Activated CD8-positive, alpha-beta memory T cell treated with anti-CD3 and anti-CD28 coated beads, Interleukin-2, amount 10 ng/mL, durations not matched to agents 7 days and 5 days (primary cell): ENCODE measurements at regions of chr6 and their contacts with region 1.

Region 1: DNA sequence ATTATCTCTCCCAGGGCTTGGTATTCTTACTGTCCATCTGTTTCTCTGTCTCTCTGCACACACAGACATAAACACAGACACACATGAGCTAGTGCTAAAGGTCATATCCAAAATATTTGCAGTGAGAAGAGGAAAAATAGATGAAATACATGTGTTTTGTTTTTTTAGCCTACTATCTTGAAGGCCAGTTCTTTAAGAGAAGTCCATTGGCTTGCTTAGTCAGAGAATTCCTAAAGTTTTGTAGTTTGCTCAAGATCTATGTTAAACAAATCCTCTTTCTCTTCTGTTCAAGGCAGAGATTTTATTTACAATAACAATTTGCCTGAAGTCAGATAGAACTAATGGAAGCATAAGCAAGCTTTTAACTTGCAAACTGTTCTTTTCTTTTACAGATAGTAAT is 120.0 kb upstream of the AKIRIN2 start:
- DNase-seq: no peak
- ATAC-seq: no peak
- H3K4me3 Mint-ChIP-seq: no peak overlapping the region
- H3K27ac Mint-ChIP-seq: no peak overlapping the region
- H3K4me1 Mint-ChIP-seq: peaks cover 13% of the 10 kb centered on the region
- H3K27me3 Mint-ChIP-seq: no peaks in the 10 kb centered on the region

Region 2: DNA sequence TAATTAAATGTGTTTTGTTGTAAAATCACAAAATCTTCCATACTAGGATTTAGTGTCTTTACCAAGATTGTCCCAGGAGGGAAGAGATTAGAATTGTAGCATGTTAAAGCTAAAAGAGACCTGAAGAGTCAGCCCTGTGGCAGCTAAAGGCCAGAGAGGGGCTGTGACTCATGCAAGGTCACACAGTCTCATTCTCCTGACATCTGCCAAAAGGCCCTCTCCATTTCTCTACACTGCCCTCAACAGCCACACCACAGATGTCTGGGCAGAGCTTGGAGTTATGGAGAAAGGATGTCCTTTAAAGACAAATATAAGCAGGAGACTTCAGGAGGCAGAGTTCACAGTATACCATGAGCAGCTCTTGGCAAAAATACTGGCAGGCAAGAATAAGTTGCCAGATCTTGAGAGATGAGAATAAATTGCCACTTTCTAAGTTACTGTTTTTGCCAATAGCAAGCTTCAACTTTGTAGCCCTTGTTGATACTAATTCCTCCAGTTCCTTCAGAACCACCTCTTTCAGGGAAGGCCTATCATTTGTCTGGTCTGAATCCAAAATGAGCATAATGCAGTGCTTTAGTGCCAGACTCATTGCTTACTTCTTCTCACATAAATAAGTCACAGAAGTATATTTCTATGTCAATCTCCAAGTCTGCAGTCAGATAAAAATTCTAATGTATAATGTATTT is 161.6 kb before region 1 on chr6:
- CTCF ChIA-PET with region 1: no interaction called
- DNase-seq: no peak
- ATAC-seq: no peak
- H3K4me3 Mint-ChIP-seq: no peak overlapping the region
- H3K27ac Mint-ChIP-seq: no peak overlapping the region
- H3K4me1 Mint-ChIP-seq: peaks cover 12% of the 10 kb centered on the region
- H3K27me3 Mint-ChIP-seq: no peaks in the 10 kb centered on the region

Region 3: DNA sequence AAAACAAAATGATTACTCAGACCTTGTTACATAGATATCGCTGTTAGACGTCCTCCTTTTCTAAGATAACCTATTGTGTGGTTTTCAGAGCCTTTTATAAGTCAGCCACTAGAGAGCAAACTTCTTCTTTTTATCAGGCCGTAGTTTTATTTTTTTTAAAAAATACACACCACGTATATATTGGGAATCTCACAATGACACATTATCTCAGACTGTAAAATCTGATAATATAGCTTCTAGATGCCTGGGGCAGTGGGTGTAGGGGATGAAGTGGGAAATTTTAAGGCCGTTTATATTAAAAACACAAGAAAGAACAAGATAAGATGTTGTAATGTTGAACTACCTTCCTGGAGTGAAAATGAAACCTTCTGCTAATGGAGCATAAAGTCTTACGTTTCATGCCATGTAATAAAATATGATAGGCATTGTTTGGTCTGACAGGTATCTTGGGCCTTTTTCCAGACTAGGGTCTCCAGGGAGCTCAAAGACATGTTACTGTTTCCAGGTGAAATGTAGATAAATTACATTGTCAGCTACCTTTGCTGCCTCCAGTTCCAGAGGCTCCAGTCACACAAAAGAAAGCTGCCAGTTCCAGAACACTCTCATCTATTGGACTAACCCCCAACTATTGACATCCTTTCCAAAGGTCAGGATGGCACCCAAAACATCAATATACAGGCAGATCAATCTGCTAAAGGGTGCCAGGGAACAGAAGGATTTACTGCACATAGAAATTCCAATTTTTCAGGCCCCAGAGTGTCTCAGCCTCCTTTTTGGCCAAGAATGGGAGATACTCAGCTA is 10.2 kb after region 1 on chr6:
- CTCF ChIA-PET with region 1: interaction called, 14 read pairs
- DNase-seq: no peak
- ATAC-seq: peak; percentile 82
- H3K4me3 Mint-ChIP-seq: peak overlapping the region; percentile 78
- H3K27ac Mint-ChIP-seq: peak overlapping the region; percentile 86
- H3K4me1 Mint-ChIP-seq: peaks cover 10% of the 10 kb centered on the region
- H3K27me3 Mint-ChIP-seq: no peaks in the 10 kb centered on the region